ENCODE measurements at regions of chr1 and their contacts with region 1.

Region 1: DNA sequence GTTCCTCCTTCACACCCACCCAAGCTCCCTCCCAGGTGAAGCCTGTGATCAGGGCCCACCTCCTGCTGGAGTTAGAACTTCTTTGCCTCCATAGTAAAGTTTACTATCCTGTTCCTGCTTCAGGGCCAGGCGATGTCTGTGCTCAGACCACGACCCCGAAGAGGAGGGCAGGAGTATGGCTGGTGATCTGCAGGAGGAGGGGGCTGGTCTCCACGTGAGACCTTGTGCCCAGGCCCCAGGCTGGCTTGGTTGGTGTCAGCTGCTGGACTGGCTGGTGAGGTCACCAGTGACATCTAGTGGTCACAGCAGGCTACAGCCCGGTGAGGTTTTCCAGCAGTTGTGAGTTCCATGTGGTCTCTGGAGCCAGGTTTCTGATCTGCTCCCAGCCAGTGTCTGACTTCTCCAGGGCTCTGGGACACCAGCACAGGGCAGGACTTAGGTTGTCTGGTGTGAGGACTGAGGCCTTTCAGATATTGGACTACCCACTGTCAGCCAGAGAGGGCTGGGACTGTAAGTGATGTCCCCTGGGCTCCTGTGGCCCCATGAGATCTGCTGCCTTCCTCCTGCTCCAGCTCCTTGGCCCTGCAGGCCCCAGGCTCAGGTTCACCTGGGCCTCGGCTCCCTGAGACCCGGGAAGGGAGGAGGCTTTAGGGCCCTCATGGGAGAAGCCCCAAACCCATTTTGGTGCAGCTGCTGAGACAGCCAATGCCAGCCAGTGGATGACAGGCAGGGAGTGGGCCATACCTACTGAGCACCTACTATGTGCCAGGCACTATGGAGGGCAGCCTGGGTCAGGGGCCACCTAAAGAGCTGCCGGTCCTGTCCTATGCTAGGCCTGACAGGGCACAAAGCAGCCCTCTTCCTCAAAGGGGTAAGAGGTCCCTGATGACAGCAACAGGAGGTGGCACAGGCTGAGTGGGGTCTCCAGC is 6.0 kb upstream of the UBL4B start:
- DNase-seq: peak; percentile 88
- H3K4me3 ChIP-seq: no peak overlapping the region; a peak in 1 of 4 replicates
- H3K27ac ChIP-seq: peak overlapping the region in 1 of 2 experiments; percentile 74; a peak in 2 of 4 replicates
- H3K4me1 ChIP-seq: peaks cover 0 to 72% of the 10 kb centered on the region in 2 experiments; a peak in 2 of 4 replicates
- H3K27me3 ChIP-seq: no peaks in the 10 kb centered on the region
- CTCF ChIP-seq: peak; percentile 92
- EP300 ChIP-seq: no peak
- RAD21 ChIP-seq: peak; percentile 95

Region 2: DNA sequence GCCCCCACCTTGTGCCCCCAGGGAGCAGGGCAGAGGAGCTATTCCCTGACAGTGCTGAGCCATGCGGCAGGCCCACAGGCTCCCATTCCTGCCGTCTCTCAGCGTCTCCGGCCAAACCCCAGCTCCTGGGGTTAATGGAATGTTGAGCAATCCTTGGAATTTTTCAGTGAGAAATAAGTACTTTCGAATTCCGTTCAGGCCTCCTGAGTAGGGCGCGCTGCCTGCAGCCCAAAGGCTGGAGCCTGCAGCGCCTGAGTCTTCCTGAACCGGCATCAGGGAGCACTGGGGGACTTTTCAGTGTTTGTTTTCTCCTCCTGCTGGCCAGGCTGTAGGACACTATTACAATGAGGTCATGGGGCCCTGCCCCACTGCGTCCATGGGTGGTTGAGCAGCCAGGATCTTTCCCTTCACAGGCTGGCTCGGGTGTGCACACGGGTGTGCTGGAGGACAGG is 228.9 kb before region 1 on chr1:
- CTCF ChIA-PET with region 1: no interaction called
- POLR2A ChIA-PET with region 1: no interaction called
- DNase-seq: no peak
- H3K4me3 ChIP-seq: no peak overlapping the region
- H3K27ac ChIP-seq: peak overlapping the region; percentile 73 to 76
- H3K4me1 ChIP-seq: peaks cover 4 to 28% of the 10 kb centered on the region in 2 experiments; a peak in 3 of 4 replicates
- H3K27me3 ChIP-seq: no peaks in the 10 kb centered on the region
- CTCF ChIP-seq: peak; percentile 44
- EP300 ChIP-seq: peak in 1 of 2 experiments; percentile 42; a peak in 1 of 4 replicates
- RAD21 ChIP-seq: no peak

Region 3: DNA sequence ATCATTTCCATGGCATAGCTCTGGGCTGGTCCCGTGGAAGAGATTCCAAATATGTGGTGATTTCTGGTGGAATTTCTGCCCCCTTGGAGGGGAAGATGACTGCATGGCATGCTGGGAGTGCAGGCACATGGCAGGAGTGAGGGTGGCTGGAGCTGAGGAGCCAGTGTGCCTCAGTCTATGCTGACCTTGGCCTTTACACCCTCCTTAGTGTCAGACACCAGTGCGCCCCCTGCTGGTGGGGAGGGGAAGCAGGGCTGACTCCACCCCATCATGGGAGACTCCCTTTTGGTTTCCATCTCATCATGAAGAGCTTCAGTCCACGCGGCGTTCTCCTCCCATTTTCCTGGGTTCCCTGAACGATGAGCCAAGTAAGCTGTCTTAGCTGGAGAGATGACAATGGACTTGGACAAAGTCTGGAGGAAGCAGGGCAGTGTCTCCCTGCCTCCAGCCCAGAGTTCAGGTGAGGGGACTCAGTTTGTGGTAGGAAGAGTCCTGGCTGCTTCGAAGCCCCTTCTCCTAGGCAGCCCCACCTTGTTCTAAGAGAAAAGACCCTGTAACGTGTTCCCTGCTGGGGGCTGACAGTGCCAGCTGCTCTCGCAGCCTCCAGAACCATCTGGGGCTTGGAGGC is 46.1 kb before region 1 on chr1:
- CTCF ChIA-PET with region 1: interaction called, 1,768 read pairs
- POLR2A ChIA-PET with region 1: interaction called, 21 read pairs
- DNase-seq: no peak
- H3K4me3 ChIP-seq: no peak overlapping the region; a peak in 1 of 4 replicates
- H3K27ac ChIP-seq: peak overlapping the region in 1 of 2 experiments; percentile 93; a peak in 2 of 4 replicates
- H3K4me1 ChIP-seq: peaks cover 42 to 97% of the 10 kb centered on the region in 2 experiments
- H3K27me3 ChIP-seq: no peaks in the 10 kb centered on the region
- CTCF ChIP-seq: peak; percentile 81
- EP300 ChIP-seq: no peak
- RAD21 ChIP-seq: no peak

Region 4: DNA sequence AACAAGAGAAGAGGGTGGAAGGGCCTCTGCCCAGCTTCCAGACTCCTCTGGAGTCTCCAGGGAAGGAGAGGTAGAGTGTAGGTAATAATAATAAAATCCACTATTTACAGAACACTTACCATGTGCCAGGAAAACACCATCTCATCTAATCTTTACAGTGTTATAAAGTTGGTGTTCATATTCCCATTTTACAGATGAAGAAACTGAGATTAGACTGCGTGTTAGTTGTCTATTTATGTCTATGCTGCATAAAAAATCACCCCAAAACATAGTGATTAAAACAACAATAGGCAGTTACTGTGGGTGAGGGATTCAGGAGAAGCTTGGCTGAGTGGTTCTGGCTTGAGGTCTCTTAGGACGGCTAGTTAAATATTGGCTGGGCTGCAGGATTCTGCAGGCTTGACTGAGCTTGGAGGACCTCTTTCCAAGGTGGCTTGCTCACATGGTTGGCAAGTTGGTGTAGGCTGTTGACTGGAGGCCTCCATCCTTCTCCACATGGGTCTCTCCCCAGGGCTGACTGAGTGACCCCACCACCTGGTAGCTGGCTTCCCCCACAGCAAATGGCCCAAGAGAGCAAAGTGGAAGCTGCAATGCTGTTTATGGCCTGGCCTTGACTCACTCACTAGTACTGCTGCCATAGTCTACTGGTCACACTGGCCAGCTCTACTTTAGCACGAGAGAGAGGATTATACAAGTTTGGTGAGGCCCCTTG is 29.3 kb before region 1 on chr1:
- CTCF ChIA-PET with region 1: interaction called, 18 read pairs
- POLR2A ChIA-PET with region 1: no interaction called
- DNase-seq: no peak
- H3K4me3 ChIP-seq: no peak overlapping the region
- H3K27ac ChIP-seq: no peak overlapping the region
- H3K4me1 ChIP-seq: peaks cover 0 to 10% of the 10 kb centered on the region in 2 experiments; a peak in 1 of 4 replicates
- H3K27me3 ChIP-seq: no peaks in the 10 kb centered on the region; the same call in 1 of the 2 replicates
- CTCF ChIP-seq: no peak
- EP300 ChIP-seq: no peak
- RAD21 ChIP-seq: no peak

Region 5: DNA sequence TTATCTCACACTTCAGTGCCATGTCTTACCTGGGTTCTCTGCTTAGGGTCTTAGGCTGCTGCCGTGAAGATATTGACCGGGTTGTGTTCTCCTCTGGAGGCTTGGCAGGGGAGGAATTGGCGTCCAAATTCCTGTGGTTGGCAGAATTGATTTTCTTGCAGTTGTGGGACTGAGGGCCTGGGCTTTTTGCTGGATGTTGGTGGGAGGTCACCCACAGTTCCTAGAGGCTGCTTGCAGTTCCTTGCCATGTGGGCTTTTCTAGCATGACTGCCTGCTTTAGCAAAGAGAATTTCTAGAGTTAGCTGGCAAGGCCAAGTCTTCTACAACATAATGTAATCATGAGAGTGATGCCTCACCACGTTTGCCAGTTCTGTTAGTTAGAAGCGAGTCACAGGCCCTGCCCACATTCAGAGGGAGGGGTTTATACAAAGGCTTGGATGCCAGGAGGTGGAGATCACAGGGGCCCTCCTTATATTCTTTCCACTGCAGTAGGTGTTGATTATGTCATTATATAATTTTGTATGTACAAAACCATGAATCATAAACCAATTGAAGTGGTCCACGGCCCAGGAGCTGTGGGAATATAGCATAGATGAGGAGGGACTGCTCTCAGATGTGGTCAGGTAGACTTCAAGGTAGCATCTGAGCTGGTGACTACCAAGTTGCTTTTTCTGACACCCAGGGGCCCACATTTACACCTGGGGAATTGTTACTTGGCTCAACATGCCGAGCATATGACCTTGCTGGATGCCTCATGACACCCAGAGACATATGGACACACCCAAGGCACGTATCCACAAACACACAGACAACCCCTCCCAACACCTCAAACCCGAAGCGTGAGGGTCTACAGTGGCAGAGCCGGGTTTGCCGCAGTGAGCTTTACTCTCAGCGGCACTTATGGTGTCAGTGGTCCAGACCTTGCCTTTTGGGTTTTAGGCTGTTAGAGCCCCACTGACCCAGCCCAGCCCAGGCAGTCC is 12.6 kb after region 1 on chr1:
- CTCF ChIA-PET with region 1: interaction called, 40 read pairs
- POLR2A ChIA-PET with region 1: no interaction called
- DNase-seq: no peak
- H3K4me3 ChIP-seq: no peak overlapping the region
- H3K27ac ChIP-seq: no peak overlapping the region
- H3K4me1 ChIP-seq: peaks cover 0 to 6% of the 10 kb centered on the region in 2 experiments; a peak in 1 of 4 replicates
- H3K27me3 ChIP-seq: no peaks in the 10 kb centered on the region; the same call in 1 of the 2 replicates
- CTCF ChIP-seq: no peak
- EP300 ChIP-seq: no peak
- RAD21 ChIP-seq: no peak

Region 6: DNA sequence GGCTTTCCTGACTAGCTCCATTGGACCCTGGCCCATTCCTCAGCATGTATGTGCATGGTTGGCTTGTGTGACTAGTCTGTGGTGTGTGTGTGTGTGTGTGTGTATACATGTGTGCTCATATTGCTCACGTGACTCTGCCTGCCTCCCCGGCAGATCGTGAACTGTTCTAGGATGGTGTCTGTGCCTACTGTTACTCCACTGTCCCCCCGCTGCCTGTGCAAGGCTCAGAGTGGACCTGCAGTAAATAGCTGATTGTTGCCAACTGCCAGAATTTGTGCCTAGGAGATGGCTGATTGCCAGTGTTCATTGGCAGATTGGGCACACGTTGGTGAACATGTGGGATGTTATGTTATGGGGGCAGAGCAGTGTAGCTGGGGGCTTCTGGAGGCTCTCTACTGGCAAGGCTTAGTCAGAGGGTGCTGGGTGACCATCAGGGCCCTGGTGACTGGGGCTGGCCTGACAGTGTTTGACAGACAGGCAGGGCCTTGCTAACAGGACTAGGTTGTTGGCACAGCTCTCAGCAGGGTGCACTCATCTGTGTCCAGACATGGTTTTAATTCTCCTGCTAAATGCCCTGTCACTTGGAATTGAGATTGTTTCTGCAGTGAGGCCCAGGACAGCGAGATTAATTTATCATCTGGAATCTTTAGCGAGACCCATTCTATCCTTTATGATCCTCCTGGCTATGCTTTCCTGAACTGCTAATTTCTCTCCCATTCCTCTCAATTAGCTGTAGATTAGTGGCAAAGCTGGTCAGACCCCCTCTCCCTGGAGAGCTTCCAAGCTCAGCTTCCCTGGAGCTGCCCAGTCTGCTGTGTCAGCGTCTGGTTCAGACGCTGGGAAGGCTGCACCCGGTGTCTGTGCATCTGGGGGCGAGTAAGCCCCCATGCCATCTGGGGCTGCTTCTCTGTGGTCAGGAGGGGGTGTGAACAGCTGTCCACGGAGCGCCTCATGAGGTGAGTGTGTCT is 64.8 kb after region 1 on chr1:
- CTCF ChIA-PET with region 1: interaction called, 16 read pairs
- POLR2A ChIA-PET with region 1: no interaction called
- DNase-seq: peak; percentile 88
- H3K4me3 ChIP-seq: no peak overlapping the region
- H3K27ac ChIP-seq: peak overlapping the region in 1 of 2 experiments; percentile 96; a peak in 2 of 4 replicates
- H3K4me1 ChIP-seq: peaks cover 0 to 72% of the 10 kb centered on the region in 2 experiments; a peak in 2 of 4 replicates
- H3K27me3 ChIP-seq: no peaks in the 10 kb centered on the region
- CTCF ChIP-seq: no peak
- EP300 ChIP-seq: peak in 1 of 2 experiments; percentile 95; a peak in 2 of 4 replicates
- RAD21 ChIP-seq: peak; percentile 17

Region 7: GRCh38 chr1:110542725-110543124 is 436.4 kb after region 1 on chr1:
- CTCF ChIA-PET with region 1: no interaction called
- POLR2A ChIA-PET with region 1: no interaction called
- DNase-seq: no peak
- H3K4me3 ChIP-seq: no peak overlapping the region
- H3K27ac ChIP-seq: no peak overlapping the region
- H3K4me1 ChIP-seq: no peaks in the 10 kb centered on the region
- H3K27me3 ChIP-seq: no peaks in the 10 kb centered on the region
- CTCF ChIP-seq: no peak
- EP300 ChIP-seq: no peak
- RAD21 ChIP-seq: no peak

Region 8: DNA sequence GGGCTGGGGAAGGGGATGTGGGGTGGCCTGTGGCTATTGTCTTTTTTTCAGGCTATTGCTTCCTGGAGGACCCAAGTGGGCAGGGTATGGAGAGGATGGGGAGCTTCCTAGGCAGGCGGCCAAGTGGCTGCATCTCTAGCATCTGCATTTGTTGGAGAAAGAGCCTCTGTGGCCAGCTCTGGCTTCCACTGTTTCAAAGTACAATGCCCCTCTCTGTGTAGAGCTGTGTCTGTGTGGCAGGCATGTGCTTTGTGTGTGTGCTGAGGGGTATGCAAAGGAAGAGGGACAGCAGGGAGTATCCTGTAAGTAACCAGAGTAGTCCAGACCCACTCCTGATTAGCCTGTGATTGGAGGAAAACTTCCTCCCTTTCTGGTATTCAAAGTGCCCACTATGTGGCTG is 459.3 kb after region 1 on chr1:
- CTCF ChIA-PET with region 1: no interaction called
- POLR2A ChIA-PET with region 1: no interaction called
- DNase-seq: no peak
- H3K4me3 ChIP-seq: no peak overlapping the region
- H3K27ac ChIP-seq: no peak overlapping the region
- H3K4me1 ChIP-seq: no peaks in the 10 kb centered on the region; a peak in 1 of 4 replicates
- H3K27me3 ChIP-seq: no peaks in the 10 kb centered on the region
- CTCF ChIP-seq: no peak
- EP300 ChIP-seq: no peak
- RAD21 ChIP-seq: no peak